Heart right ventricle (tissue), 16 donors: ENCODE measurements at regions of chr9 and their contacts with region 1.

Region 1: DNA sequence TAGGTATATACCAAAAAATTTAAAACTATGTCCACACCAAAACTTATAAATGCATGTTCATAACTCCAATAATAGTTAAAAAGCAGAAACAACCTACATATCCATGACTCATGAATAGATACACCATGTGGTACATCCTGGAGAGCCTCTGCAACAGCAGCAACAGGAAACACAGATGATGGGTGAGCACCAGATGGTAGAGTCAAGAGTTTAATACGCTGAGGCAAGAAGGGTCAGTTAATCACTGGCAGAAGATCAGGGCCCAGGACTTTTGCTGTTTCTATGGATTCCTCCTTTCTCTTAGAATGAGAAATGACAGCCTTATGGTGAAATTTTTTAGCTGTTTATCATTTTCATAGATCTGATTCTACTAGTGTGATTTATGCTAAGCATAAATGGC is 351.8 kb upstream of the ADAMTSL1 start:
- DNase-seq: no peak
- ATAC-seq: no peak
- H3K4me3 ChIP-seq: no peak overlapping the region
- H3K27ac ChIP-seq: no peak overlapping the region
- H3K4me1 ChIP-seq: no peaks in the 10 kb centered on the region
- H3K27me3 ChIP-seq: no peaks in the 10 kb centered on the region
- CTCF ChIP-seq: no peak

Region 2: GRCh38 chr9:18060245-18060934 is 61.8 kb before region 1 on chr9:
- intact Hi-C with region 1: loop called in 1 of 10 experiments (anchors 10 kb)
- DNase-seq: no peak
- ATAC-seq: no peak
- H3K4me3 ChIP-seq: no peak overlapping the region
- H3K27ac ChIP-seq: no peak overlapping the region
- H3K4me1 ChIP-seq: no peaks in the 10 kb centered on the region
- H3K27me3 ChIP-seq: no peaks in the 10 kb centered on the region
- CTCF ChIP-seq: peak in 2 of 9 donors; percentile 8 to 22